ENCODE measurements at regions of chr11 and their contacts with region 1.

Region 1: GRCh38 chr11:94664346-94664745 is 97.2 kb downstream of the PIWIL4 start:
- DNase-seq: peak; percentile 57
- H3K4me3 Mint-ChIP-seq: no peak overlapping the region
- H3K27ac Mint-ChIP-seq: peak overlapping the region; percentile 27
- H3K4me1 Mint-ChIP-seq: peaks cover 26% of the 10 kb centered on the region
- H3K27me3 Mint-ChIP-seq: no peaks in the 10 kb centered on the region
- CTCF ChIP-seq: no peak

Region 2: GRCh38 chr11:94734563-94735275 is 70.4 kb after region 1 on chr11:
- CTCF ChIA-PET with region 1: no interaction called
- intact Hi-C with region 1: loop called (anchors 5 kb)
- DNase-seq: no peak
- H3K4me3 Mint-ChIP-seq: no peak overlapping the region
- H3K27ac Mint-ChIP-seq: no peak overlapping the region
- H3K4me1 Mint-ChIP-seq: peaks cover 12% of the 10 kb centered on the region
- H3K27me3 Mint-ChIP-seq: no peaks in the 10 kb centered on the region
- CTCF ChIP-seq: no peak

Region 3: DNA sequence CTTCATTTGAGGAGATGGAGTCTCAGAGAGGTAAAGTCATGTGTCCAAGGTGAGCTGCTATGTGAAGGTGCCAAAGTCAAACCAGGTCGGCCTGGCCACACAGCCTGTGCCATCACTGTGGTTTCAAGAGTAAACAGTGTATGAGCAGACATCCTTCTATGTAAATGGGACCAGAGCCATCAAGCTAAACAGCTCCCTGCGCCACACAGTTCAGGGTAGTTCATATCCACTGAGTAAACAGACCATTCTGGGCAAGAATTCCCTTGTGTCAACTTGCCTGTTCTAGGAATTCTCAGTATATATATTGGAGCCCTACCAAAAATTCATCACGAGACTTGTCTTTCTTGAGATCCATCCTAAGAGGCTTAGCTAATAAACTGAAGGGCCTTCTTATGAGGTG is 181.3 kb after region 1 on chr11:
- CTCF ChIA-PET with region 1: no interaction called
- intact Hi-C with region 1: no loop called
- DNase-seq: no peak
- H3K4me3 Mint-ChIP-seq: no peak overlapping the region
- H3K27ac Mint-ChIP-seq: no peak overlapping the region
- H3K4me1 Mint-ChIP-seq: no peaks in the 10 kb centered on the region
- H3K27me3 Mint-ChIP-seq: no peaks in the 10 kb centered on the region
- CTCF ChIP-seq: no peak

Measured in Calu3 (cell line).